PC-9 (cell line): ENCODE measurements at regions of chr6 and their contacts with region 1.

Region 1: DNA sequence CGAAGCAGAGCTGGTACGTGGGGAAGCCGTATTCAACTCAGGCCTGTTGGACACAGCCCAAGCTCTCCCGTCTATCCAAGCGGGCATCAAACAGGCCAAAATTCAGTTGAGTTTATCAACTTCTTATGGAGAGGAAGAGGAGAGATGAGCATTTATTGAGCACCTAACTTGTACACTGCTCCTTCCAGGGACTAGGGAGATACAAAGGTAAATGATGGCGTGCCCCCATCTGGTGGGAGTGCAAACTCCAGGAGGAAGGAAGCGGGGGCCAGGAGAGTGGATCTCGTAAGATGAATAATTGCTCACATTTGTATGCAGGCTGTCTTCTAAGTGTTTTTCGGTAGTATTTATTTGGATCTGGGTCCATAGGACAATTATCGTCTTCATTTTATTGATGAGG is 146.6 kb downstream of the SOBP start:
- DNase-seq: no peak
- H3K4me3 ChIP-seq: no peak overlapping the region
- H3K27ac ChIP-seq: no peak overlapping the region
- H3K4me1 ChIP-seq: no peaks in the 10 kb centered on the region
- H3K27me3 ChIP-seq: no peaks in the 10 kb centered on the region
- CTCF ChIP-seq: no peak

Region 2: GRCh38 chr6:107488174-107488874 is 148.2 kb before region 1 on chr6:
- CTCF ChIA-PET with region 1: no interaction called
- POLR2A ChIA-PET with region 1: no interaction called
- intact Hi-C with region 1: no loop called
- DNase-seq: no peak
- H3K4me3 ChIP-seq: peak overlapping the region; percentile 58
- H3K27ac ChIP-seq: no peak overlapping the region
- H3K4me1 ChIP-seq: peaks cover 5% of the 10 kb centered on the region; the same call in 1 of the 2 replicates
- H3K27me3 ChIP-seq: peaks cover 35% of the 10 kb centered on the region
- CTCF ChIP-seq: no peak

Region 3: GRCh38 chr6:107585815-107586435 is 50.6 kb before region 1 on chr6:
- CTCF ChIA-PET with region 1: no interaction called
- POLR2A ChIA-PET with region 1: interaction called, 14 read pairs
- intact Hi-C with region 1: no loop called
- DNase-seq: no peak
- H3K4me3 ChIP-seq: no peak overlapping the region
- H3K27ac ChIP-seq: no peak overlapping the region
- H3K4me1 ChIP-seq: no peaks in the 10 kb centered on the region
- H3K27me3 ChIP-seq: no peaks in the 10 kb centered on the region
- CTCF ChIP-seq: no peak